ENCODE measurements at regions of chr4 and their contacts with region 1.

Region 1: GRCh38 chr4:140237606-140237986 is 83.6 kb upstream of the MAML3 start:
- DNase-seq: peak; percentile 88
- H3K4me3 ChIP-seq: peak overlapping the region; percentile 29 to 31; a peak in 3 of 4 replicates
- H3K27ac ChIP-seq: peak overlapping the region; percentile 84 to 100
- H3K4me1 ChIP-seq: peaks cover 34 to 45% of the 10 kb centered on the region in 2 experiments
- H3K27me3 ChIP-seq: no peaks in the 10 kb centered on the region
- CTCF ChIP-seq: no peak
- EP300 ChIP-seq: peak; percentile 54 to 86; a peak in 3 of 4 replicates
- RAD21 ChIP-seq: peak; percentile 31

Region 2: DNA sequence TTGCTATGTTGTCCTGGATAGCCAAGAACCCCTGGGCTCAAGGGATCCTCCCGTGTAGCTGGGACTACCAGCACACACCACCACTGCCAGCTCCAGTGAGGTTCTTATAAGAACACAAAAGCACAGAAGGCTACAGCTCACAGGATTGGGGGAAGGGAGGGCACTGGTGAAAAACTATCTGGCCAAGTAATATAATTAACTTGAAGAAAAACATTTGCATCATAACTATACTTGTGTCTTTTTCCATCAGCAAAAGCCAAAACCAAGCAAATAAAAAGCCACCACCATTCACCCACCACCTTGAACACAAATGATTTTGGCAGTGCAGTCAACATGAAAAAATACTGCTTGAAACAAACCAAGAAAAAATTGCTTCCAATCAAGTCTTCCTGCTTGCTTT is 271.8 kb before region 1 on chr4:
- CTCF ChIA-PET with region 1: no interaction called
- POLR2A ChIA-PET with region 1: interaction called, 11 read pairs
- DNase-seq: no peak
- H3K4me3 ChIP-seq: no peak overlapping the region
- H3K27ac ChIP-seq: peak overlapping the region in 1 of 2 experiments; percentile 100; a peak in 2 of 4 replicates
- H3K4me1 ChIP-seq: peaks cover 10 to 52% of the 10 kb centered on the region in 2 experiments; a peak in 3 of 4 replicates
- H3K27me3 ChIP-seq: no peaks in the 10 kb centered on the region
- CTCF ChIP-seq: no peak
- EP300 ChIP-seq: peak in 1 of 2 experiments; percentile 31; a peak in 1 of 4 replicates
- RAD21 ChIP-seq: peak; percentile 7; the same call in 1 of the 2 replicates

Region 3: DNA sequence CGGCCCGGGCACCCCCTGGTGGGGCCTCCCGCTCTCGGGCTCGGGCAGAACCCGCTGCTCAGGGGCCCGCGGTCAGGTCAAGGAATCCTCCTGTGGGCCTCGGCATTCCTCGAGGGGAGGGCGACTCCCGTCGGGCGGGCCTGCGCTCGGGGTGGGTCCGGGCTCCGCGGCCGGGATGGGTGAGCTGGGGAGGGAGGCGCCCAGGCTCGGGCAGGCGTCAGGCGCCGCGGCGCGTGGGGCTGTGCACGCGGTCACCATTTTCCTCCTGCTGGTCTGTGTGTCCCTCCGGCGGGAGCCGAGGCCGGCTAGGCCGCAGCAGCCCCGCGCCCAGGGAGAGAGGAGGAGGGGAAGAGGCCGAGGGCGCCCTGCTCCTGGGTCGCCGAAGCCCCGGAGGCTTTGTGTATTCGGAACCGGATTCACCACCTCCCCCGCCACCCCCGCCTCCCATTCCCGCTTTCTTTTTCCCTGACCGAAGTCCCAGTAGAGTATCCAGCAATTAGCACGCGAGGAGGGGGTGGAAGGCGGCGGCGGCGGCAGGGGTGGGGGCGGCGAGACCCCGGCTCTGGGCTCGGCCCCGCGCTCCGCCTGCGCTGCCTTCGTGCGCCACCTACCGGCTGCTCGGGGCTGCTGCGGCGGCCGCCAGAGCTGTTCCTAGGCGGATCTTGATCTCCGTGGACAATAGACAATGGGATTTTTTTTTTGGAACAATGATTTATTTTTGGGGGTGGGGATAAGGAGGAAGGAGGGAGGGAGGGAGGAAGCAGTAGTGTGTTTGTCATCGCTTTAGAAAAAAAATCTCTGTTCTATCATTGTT is 15.4 kb after region 1 on chr4:
- CTCF ChIA-PET with region 1: interaction called, 32 read pairs
- POLR2A ChIA-PET with region 1: interaction called, 56 read pairs
- DNase-seq: peak; percentile 94
- H3K4me3 ChIP-seq: peak overlapping the region; percentile 47 to 55
- H3K27ac ChIP-seq: peak overlapping the region; percentile 78 to 92
- H3K4me1 ChIP-seq: peaks cover 49 to 57% of the 10 kb centered on the region in 2 experiments
- H3K27me3 ChIP-seq: no peaks in the 10 kb centered on the region
- CTCF ChIP-seq: peak; percentile 87
- EP300 ChIP-seq: peak in 1 of 2 experiments; percentile 40; a peak in 1 of 4 replicates
- RAD21 ChIP-seq: peak; percentile 85